ENCODE measurements at regions of chr22 and their contacts with region 1.

Region 1: DNA sequence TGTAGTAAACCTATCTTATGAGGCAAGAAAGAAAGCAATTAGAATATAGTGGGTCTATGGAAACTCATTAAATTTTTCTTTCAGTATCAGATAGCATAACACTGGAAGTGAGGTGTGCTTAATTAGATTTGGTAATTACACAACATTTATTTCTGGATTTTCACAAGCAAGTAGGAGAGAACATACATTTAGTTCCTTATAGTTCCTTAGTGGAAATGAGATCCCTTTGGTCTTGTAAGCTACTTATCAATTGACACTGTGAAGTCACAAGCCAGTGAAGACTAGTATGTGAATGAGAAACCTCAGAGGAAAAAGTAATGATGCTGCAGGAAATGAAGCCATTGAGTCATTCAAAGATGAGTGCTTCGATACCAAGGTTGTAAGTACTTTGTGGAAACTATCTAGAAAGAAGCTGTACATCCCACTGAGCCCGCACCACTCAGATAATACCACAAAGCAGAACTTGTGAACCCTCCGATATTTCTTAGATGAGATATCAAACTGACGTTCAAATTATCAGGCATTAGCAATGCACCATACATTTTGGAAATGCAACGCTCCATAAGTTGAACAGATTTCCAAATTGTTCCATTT is 53.5 kb downstream of the ENTHD1 start:
- DNase-seq: peak; percentile 47
- H3K4me3 Mint-ChIP-seq: peak overlapping the region; percentile 6
- H3K27ac Mint-ChIP-seq: peak overlapping the region; percentile 59
- H3K4me1 Mint-ChIP-seq: peaks cover 22% of the 10 kb centered on the region
- H3K27me3 Mint-ChIP-seq: peaks cover 26% of the 10 kb centered on the region

Region 2: DNA sequence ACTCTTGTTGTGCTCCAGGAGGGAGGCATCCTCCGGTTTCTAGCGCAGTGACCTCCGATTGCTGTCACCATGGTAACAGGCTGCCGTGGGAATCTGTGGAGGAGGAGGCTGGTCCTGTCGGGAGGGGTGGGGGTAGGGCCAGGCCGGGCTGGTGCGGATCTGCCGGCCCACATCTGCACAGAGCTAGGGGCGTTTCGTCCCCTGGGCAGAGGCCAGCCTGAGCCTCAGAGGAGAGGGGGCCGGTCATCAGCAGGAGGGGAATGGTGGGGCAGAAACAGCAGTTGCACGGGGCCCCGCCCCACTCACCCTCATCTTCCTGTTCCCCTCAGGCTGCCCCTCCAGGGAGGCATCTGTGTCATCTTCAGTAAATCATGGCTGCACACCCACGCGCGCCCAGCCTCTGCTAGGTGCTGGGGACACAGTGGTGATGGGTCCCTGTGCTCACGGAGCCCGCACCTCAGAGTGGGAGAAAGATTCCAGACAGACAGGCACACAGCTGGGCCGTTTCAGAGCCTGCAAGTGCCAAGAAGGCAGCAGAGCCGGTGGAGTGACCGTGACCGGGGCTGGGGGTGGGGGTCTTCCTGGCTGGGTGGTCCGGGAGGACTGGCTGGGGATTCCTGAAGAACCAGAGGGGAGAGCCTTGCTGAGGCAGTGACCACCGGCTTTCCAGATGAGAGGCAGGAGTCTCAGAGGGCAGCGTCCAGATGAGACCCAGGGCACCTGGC is 149.0 kb before region 1 on chr22:
- intact Hi-C with region 1: no loop called
- DNase-seq: no peak
- H3K4me3 Mint-ChIP-seq: no peak overlapping the region
- H3K27ac Mint-ChIP-seq: no peak overlapping the region
- H3K4me1 Mint-ChIP-seq: no peaks in the 10 kb centered on the region
- H3K27me3 Mint-ChIP-seq: peaks cover 38% of the 10 kb centered on the region

Region 3: DNA sequence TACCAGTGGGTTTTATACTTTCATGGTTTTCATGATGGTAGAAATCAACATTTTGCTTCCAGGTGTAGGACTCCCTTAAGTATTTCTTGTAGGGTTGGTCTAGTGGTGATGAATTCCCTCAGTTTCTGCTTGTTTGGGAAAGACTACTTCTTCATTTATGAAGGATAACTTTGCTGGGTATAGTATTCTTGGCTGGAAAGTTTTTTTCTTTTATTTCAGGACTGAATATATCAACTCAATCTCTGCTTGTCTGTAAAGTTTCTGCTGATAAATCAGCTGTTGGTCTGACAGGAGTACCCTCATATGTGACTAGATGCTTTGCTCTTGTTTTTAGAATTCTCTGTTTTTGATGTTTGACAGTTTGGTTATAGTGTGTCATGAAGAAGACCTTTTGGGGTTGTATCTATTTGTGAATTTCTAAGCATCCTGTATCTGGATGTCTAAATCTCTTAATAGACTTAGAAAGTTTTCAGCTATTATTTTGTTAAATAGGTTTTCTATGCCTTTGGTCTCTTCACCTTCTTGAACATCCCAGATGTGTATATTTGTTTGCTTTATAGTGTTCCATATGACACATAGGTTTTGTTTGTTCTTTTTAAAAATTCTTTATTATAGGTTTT is 42.4 kb before region 1 on chr22:
- intact Hi-C with region 1: no loop called
- DNase-seq: no peak
- H3K4me3 Mint-ChIP-seq: no peak overlapping the region
- H3K27ac Mint-ChIP-seq: no peak overlapping the region
- H3K4me1 Mint-ChIP-seq: peaks cover 3% of the 10 kb centered on the region
- H3K27me3 Mint-ChIP-seq: peaks cover 24% of the 10 kb centered on the region

Region 4: GRCh38 chr22:39809772-39810557 is 30.0 kb before region 1 on chr22:
- intact Hi-C with region 1: loop called (anchors 1 kb)
- DNase-seq: no peak
- H3K4me3 Mint-ChIP-seq: no peak overlapping the region
- H3K27ac Mint-ChIP-seq: no peak overlapping the region
- H3K4me1 Mint-ChIP-seq: peaks cover 27% of the 10 kb centered on the region
- H3K27me3 Mint-ChIP-seq: peaks cover 23% of the 10 kb centered on the region

Region 5: GRCh38 chr22:39825661-39826102 is 14.3 kb before region 1 on chr22:
- intact Hi-C with region 1: loop called (anchors 1 kb)
- DNase-seq: no peak
- H3K4me3 Mint-ChIP-seq: no peak overlapping the region
- H3K27ac Mint-ChIP-seq: no peak overlapping the region
- H3K4me1 Mint-ChIP-seq: peaks cover 20% of the 10 kb centered on the region
- H3K27me3 Mint-ChIP-seq: peaks cover 43% of the 10 kb centered on the region

Region 6: DNA sequence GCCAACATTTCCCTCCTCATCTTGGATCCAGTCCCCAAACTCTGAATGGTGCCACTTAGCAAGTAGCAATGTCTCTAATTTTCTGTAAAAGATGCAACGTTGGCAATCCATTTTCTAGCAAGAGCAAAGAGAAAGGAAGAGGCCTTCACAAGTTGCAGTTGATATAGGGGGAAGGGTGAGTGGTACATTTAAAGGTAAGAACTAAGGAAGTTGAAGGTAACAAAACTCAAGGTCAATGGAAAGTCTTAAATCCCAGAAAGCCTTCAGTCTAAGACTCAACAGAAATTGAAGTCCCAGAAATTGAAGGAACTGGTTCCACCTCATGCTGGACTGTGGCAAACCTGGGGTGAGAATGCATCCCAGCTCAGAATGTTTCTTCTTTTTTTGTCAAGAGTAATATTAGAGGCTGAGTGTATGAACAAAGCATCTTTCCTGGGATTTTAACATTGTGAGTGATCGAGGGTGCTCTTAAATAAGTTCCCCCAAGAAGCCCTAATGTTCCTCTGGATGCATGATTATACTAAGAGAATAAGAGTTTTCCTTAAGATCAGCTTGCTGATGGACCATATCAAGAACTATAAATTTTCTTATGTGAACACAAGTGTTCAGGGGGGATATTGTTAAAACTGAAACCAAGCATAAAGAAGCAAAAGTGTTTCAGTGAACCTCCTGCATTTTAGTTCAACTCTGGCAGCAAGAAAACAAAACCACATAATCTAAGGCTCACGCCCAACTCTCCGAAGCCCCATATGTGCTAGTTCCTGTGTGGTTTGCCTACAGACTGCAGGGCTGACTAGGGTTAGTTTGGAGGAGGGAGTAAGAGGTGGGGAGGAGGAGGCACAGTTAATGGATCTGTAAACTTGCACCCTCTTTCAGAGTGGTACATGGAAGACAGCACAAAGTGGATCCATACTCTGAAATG is 60.6 kb after region 1 on chr22 and contains the start of gene GRAP2:
- intact Hi-C with region 1: loop called (anchors 2 kb)
- DNase-seq: peak; percentile 78
- H3K4me3 Mint-ChIP-seq: peak within 1 kb of the TSS; percentile 98
- H3K27ac Mint-ChIP-seq: peak within 1 kb of the TSS; percentile 99
- H3K4me1 Mint-ChIP-seq: peaks cover 31% of the 10 kb centered on the region
- H3K27me3 Mint-ChIP-seq: no peaks in the 10 kb centered on the region
- total RNA-seq, gene GRAP2: 44.1 and 46.5 TPM in 2 replicates

Region 7: GRCh38 chr22:39920134-39920743 is 80.2 kb after region 1 on chr22:
- intact Hi-C with region 1: loop called (anchors 5 kb)
- DNase-seq: peak; percentile 57
- H3K4me3 Mint-ChIP-seq: peak overlapping the region; percentile 74
- H3K27ac Mint-ChIP-seq: peak overlapping the region; percentile 97
- H3K4me1 Mint-ChIP-seq: peaks cover 83% of the 10 kb centered on the region
- H3K27me3 Mint-ChIP-seq: no peaks in the 10 kb centered on the region